Prostate gland (tissue), 2 donors: ENCODE measurements at regions of chr1 and their contacts with region 1.

Region 1: GRCh38 chr1:172357753-172358385 is 62.6 kb upstream of the C1orf105 start:
- DNase-seq: no peak
- H3K4me3 ChIP-seq: no peak overlapping the region
- H3K27ac ChIP-seq: peak overlapping the region; percentile 52 to 58
- H3K4me1 ChIP-seq: peaks cover 14% of the 10 kb centered on the region
- H3K27me3 ChIP-seq: no peaks in the 10 kb centered on the region
- CTCF ChIP-seq: no peak
- POLR2A ChIP-seq: no peak

Region 2: DNA sequence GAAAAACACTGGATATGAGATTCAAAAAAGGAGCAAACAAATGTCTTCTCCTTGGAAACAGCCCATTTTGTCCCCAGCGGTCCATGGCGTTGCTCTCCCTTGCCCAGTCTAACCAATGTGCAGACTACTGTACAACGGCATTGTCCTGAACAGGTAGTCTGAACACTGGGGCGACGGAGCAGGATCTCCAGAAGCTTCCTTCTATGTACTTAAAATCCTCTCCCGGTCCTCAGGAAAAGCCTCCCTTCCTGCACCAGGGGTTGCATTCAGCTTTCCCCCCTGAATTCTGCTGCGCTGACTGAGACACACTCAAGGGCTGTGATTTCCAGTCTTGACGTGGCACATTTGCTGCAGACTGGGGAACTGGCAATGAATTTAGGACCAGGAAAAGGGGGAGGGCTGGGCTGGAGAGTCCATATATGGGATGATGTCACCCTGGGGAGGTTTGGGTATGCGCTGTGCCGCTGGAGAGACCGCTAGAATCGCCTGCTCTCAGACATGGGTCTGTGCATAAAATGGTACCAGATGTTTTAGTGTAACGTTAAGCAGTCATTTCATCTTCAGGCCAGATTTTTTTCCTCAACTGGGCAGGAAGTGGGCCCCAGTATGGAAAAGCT is 213.3 kb before region 1 on chr1:
- intact Hi-C with region 1: loop called (anchors 5 kb)
- DNase-seq: peak; percentile 23
- H3K4me3 ChIP-seq: peak overlapping the region; percentile 26 to 28
- H3K27ac ChIP-seq: peak overlapping the region; percentile 68 to 69
- H3K4me1 ChIP-seq: no peaks in the 10 kb centered on the region
- H3K27me3 ChIP-seq: no peaks in the 10 kb centered on the region
- CTCF ChIP-seq: no peak
- POLR2A ChIP-seq: no peak

Region 3: DNA sequence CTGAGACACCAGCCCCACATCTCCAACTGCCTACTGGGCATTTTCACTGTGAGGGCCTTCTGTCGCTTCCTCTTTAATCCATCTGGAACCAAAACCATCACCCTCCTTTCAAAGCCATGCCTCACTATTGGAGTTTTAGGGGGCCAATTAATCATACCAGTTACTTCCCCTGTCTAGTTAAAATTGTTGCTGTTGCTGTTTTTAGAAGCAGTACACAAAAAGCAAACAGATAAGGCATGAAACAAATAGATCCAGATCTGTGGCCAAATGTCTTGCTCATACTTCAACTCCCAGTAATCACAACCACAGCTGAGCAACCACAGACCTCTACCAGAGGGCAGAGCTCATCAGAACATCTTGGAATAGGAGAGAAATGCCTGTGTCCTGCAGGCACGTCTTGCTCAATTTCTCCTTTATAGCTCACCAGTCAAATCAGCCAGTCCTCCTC is 71.2 kb before region 1 on chr1:
- intact Hi-C with region 1: loop called (anchors 10 kb)
- DNase-seq: no peak
- H3K4me3 ChIP-seq: no peak overlapping the region
- H3K27ac ChIP-seq: no peak overlapping the region
- H3K4me1 ChIP-seq: no peaks in the 10 kb centered on the region
- H3K27me3 ChIP-seq: no peaks in the 10 kb centered on the region
- CTCF ChIP-seq: no peak
- POLR2A ChIP-seq: no peak